CD8-positive, alpha-beta memory T cell (primary cell): ENCODE measurements at regions of chr1 and their contacts with region 1.

Region 1: DNA sequence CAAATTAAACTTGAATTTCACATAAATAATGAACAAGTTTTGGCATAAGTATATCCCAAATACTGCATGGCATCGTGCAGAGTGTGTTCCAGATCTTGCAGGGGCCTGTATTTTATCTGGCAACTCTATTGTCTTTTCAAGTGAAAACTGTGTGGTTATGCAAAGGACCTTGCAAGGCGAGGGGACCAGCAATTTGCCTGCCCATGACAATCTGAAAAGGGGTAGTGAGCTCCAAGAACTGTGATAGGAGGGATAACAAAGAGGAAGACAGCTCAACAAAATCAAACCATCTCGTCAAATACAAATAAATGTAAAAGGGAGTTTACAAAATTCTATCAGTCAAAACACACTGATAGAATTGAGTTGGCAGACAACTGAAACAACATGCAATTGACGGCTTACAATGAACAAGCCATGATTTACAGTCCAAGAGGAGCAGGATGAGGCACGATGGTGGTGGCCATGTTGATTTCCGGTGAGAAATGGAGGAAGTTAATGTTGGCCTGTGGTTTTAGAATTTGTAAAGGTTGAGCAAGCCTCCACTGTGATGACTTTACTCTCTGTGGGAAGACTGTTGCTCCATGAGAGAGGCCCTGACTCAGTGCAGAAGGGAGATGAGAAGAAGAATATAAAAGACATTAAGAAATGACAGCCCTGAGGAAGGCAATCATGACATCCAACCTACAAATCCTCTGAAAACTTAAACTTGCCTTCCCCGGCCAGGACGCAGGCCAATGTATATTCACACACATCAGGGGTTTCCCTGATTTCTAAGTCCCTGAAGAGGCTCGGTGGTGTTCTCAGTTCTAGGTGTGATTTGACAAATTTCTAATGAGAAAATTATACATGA is 132.2 kb downstream of the ADSS2 start:
- DNase-seq: peak; percentile 4 to 71 (median 44)
- H3K4me3 ChIP-seq: no peak overlapping the region
- H3K4me3 Mint-ChIP-seq: peak overlapping the region; percentile 33 to 82 (median 71)
- H3K27ac ChIP-seq: peak overlapping the region; percentile 27
- H3K27ac Mint-ChIP-seq: peak overlapping the region; percentile 66 to 96 (median 88)
- H3K4me1 ChIP-seq: peaks cover 43% of the 10 kb centered on the region
- H3K4me1 Mint-ChIP-seq: peaks cover 65 to 85% (median 65%) of the 10 kb centered on the region in 3 donors
- H3K27me3 ChIP-seq: no peaks in the 10 kb centered on the region
- H3K27me3 Mint-ChIP-seq: no peaks in the 10 kb centered on the region

Region 2: DNA sequence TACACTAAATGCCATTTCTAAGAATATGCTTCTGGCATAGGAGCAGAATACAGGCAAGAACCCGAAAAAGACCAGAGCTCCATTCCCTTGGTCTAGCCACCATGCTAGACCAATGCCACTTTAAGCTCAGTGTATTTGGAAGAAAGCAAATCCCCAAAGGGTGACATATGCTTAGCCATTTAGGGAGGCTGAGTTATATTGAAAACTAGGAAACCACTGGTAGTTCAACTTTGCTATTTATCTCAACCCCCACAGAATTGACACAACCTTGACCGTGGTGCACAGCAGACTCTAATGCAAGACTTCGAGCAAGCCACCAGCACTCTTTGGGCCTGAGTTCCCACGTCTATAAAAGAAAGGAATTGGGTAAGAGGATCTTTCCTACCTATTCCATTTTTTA is 35.7 kb before region 1 on chr1:
- CTCF ChIA-PET with region 1: no interaction called
- POLR2A ChIA-PET with region 1: no interaction called
- DNase-seq: no peak
- H3K4me3 ChIP-seq: no peak overlapping the region
- H3K4me3 Mint-ChIP-seq: no peak overlapping the region
- H3K27ac ChIP-seq: no peak overlapping the region
- H3K27ac Mint-ChIP-seq: no peak overlapping the region
- H3K4me1 ChIP-seq: no peaks in the 10 kb centered on the region
- H3K4me1 Mint-ChIP-seq: no peaks in the 10 kb centered on the region
- H3K27me3 ChIP-seq: no peaks in the 10 kb centered on the region
- H3K27me3 Mint-ChIP-seq: peaks cover 2 to 25% of the 10 kb centered on the region in 2 donors

Region 3: DNA sequence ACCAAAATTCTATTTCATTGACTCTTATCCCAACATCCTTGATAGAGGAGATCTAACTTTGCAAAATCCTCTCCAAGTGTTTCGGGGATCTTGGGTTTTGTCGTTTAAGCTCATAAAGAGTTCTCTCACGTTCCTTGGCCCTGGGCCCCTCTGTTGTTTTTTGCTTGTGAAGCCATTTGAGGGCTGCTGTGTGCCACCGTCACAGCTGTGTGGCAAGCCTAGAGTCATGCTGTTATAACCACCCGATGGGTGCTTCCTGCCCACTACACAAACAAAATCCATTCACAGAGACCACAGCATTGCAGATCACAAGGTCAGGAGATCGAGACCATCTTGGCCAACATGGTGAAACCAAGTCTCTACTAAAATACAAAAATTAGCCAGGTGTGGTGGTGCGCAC is 21.9 kb before region 1 on chr1:
- CTCF ChIA-PET with region 1: interaction called, 16 read pairs
- POLR2A ChIA-PET with region 1: no interaction called
- DNase-seq: no peak
- H3K4me3 ChIP-seq: no peak overlapping the region
- H3K4me3 Mint-ChIP-seq: no peak overlapping the region
- H3K27ac ChIP-seq: no peak overlapping the region
- H3K27ac Mint-ChIP-seq: peak overlapping the region in 2 of 8 donors; percentile 32 to 53
- H3K4me1 ChIP-seq: no peaks in the 10 kb centered on the region
- H3K4me1 Mint-ChIP-seq: peaks cover 8 to 9% (median 8%) of the 10 kb centered on the region in 3 donors
- H3K27me3 ChIP-seq: no peaks in the 10 kb centered on the region
- H3K27me3 Mint-ChIP-seq: peaks cover 0 to under 1% of the 10 kb centered on the region in 2 donors